ENCODE measurements at regions of chr3 and their contacts with region 1.

Region 1: DNA sequence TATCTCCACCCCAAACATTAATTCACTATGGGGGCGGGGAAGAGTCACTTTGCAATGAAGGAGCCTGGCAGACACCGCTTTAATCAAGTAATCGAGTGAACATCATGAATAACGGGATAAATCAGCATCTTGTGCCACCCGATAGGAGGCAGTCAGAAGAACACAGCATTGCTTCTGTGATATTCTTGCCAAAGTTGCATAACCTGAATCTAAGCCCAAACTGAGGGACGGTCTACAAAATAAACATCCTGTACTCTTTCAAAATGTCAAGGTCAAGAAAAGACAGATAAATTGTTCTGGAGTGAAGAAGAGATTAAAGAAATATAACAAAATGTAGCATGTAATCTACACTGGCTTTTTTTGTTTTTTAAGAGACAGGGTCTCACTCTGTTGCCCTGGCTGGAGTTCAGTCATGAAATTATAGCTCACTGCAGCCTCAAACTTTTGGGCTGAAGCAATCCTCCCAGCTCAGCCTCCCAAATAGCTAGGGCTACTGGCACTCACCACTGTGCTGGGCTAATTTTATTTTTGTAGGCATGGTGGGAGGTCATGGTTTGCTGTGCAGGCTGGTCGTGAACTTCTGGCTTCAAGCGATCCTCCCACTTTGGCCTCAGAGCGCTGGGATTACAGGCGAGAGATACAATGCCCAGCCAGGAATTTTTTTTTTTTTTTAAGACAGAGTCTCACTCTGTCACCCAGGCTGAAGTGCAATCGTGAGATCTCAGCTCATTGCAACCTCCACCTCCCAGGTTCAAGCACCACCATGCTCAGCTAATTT is 20.1 kb upstream of the VWA5B2 start:
- DNase-seq: no peak
- H3K4me3 ChIP-seq: no peak overlapping the region
- H3K4me3 Mint-ChIP-seq: no peak overlapping the region
- H3K27ac ChIP-seq: no peak overlapping the region
- H3K27ac Mint-ChIP-seq: no peak overlapping the region
- H3K4me1 ChIP-seq: no peaks in the 10 kb centered on the region
- H3K4me1 Mint-ChIP-seq: no peaks in the 10 kb centered on the region
- H3K27me3 ChIP-seq: no peaks in the 10 kb centered on the region
- H3K27me3 Mint-ChIP-seq: peaks cover 15 to 20% of the 10 kb centered on the region in 2 donors

Region 2: DNA sequence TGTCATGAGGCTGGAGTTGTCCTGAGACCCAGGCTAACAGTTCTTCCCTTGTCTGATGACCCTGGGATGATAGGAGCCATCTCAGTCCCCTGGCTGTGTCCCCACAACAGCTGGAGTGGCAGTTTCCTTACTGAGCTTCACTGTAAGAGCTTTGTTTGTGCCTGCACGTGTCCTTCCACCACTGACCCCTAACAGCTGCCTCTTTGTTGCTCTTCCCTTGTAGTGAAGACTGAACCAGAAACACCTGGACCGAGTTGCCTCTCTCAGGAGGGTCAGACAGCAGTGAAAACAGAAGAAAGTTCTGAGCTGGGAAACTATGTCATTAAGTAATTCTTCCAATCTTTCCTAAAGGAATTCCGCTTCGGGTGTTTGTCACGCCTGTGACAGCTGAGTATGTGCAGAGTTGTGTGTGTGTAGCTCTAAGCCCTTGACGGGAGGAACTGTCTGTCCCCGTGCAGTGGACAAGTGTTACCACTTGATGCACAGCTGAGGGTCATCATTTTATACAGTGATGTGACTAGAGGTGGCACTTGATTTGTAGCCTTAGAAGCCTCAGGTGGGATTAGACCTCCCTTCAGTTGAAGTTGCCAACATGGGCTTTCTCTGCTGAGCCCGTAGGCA is 409.0 kb before region 1 on chr3:
- CTCF ChIA-PET with region 1: no interaction called
- POLR2A ChIA-PET with region 1: no interaction called
- DNase-seq: no peak
- H3K4me3 ChIP-seq: no peak overlapping the region
- H3K4me3 Mint-ChIP-seq: no peak overlapping the region
- H3K27ac ChIP-seq: no peak overlapping the region
- H3K27ac Mint-ChIP-seq: peak overlapping the region in 2 of 8 donors; percentile 1 to 83
- H3K4me1 ChIP-seq: no peaks in the 10 kb centered on the region
- H3K4me1 Mint-ChIP-seq: no peaks in the 10 kb centered on the region
- H3K27me3 ChIP-seq: no peaks in the 10 kb centered on the region
- H3K27me3 Mint-ChIP-seq: no peaks in the 10 kb centered on the region

Region 3: GRCh38 chr3:184298759-184299496 is 89.6 kb after region 1 on chr3 and contains the start of gene PSMD2:
- CTCF ChIA-PET with region 1: no interaction called
- POLR2A ChIA-PET with region 1: interaction called, 11 read pairs
- DNase-seq: peak; percentile 95 to 98 (median 98)
- H3K4me3 ChIP-seq: peak within 1 kb of the TSS; percentile 78
- H3K4me3 Mint-ChIP-seq: peak within 1 kb of the TSS; percentile 89 to 96 (median 92)
- H3K27ac ChIP-seq: peak within 1 kb of the TSS; percentile 79
- H3K27ac Mint-ChIP-seq: peak within 1 kb of the TSS; percentile 86 to 95 (median 94)
- H3K4me1 ChIP-seq: peaks cover 14% of the 10 kb centered on the region
- H3K4me1 Mint-ChIP-seq: peaks cover 23 to 36% (median 36%) of the 10 kb centered on the region in 3 donors
- H3K27me3 ChIP-seq: no peaks in the 10 kb centered on the region
- H3K27me3 Mint-ChIP-seq: peaks cover 0 to 4% of the 10 kb centered on the region in 2 donors
- total RNA-seq, gene PSMD2: 334 to 342 TPM

Region 4: DNA sequence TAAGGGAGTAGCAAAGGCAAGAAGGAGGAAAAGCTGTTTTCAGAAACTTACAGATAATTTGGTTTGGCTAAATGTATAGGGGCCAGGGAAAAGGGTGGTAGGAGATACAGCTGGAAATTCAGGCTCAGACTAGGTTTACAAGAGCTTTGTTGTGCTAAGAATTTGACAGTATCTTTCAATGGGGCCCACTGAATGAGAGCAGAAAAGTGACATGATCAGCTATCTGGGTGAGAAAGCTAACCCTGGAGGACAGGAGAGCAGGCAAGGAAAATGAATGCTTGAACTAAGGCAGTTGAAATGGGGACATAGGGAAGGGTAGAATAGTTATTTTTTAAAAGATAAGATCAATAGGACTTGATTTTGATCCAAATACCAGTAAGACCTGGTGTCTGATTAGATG is 102.3 kb after region 1 on chr3:
- CTCF ChIA-PET with region 1: no interaction called
- POLR2A ChIA-PET with region 1: no interaction called
- DNase-seq: no peak
- H3K4me3 ChIP-seq: no peak overlapping the region
- H3K4me3 Mint-ChIP-seq: peak overlapping the region in 3 of 7 donors; percentile 13 to 48 (median 45)
- H3K27ac ChIP-seq: no peak overlapping the region
- H3K27ac Mint-ChIP-seq: peak overlapping the region in 3 of 8 donors; percentile 52 to 70 (median 68)
- H3K4me1 ChIP-seq: peaks cover 10% of the 10 kb centered on the region
- H3K4me1 Mint-ChIP-seq: peaks cover 9 to 16% (median 14%) of the 10 kb centered on the region in 3 donors
- H3K27me3 ChIP-seq: no peaks in the 10 kb centered on the region
- H3K27me3 Mint-ChIP-seq: no peaks in the 10 kb centered on the region